Motor neuron (in vitro differentiated cells): ENCODE measurements at regions of chr2 and their contacts with region 1.

Region 1: GRCh38 chr2:56183643-56184499 is at the start of gene CCDC85A:
- ATAC-seq: peak; percentile 79 to 92 (median 90)
- H3K4me3 ChIP-seq: peak within 1 kb of the TSS; percentile 51 to 89 (median 81)
- H3K27ac ChIP-seq: peak within 1 kb of the TSS in 1 of 2 donors; percentile 14
- H3K4me1 ChIP-seq: peaks cover 8 to 9% of the 10 kb centered on the region in 2 donors
- total RNA-seq, gene CCDC85A: 0.24 to 6.0 (median 1.7) TPM

Region 2: GRCh38 chr2:55168221-55169154 is 1015.4 kb before region 1 on chr2:
- in situ Hi-C with region 1: no loop called
- ATAC-seq: peak; percentile 59 to 87 (median 71)
- H3K4me3 ChIP-seq: no peak overlapping the region
- H3K27ac ChIP-seq: no peak overlapping the region
- H3K4me1 ChIP-seq: peaks cover 36 to 44% of the 10 kb centered on the region in 2 donors

Region 3: GRCh38 chr2:56749152-56749752 is 565.4 kb after region 1 on chr2:
- in situ Hi-C with region 1: loop called in 5 of 9 experiments (anchors 10 to 25 kb)
- ATAC-seq: peak in 3 of 8 experiments; percentile 25 to 33 (median 26)
- H3K4me3 ChIP-seq: no peak overlapping the region
- H3K27ac ChIP-seq: no peak overlapping the region
- H3K4me1 ChIP-seq: no peaks in the 10 kb centered on the region

Region 4: DNA sequence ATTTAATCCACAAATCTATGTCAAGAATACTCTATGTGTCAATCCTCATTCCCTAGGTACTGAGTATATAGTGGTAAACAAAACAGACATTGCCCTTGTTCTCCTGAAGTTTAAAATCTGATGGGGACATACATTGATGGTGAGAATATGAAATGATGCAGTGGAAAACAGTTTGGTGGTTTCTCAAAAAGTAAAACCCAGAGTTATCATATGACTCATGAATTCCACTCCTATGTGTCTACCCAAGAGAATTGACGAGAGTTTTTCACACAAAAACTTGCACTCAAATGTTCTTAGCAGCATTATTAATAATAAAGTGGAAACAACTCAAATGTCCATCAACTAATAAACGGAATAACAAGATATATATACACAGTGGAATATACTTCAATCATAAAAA is 586.6 kb after region 1 on chr2:
- in situ Hi-C with region 1: loop called in 1 of 9 experiments (anchors 25 kb)
- ATAC-seq: no peak
- H3K4me3 ChIP-seq: no peak overlapping the region
- H3K27ac ChIP-seq: no peak overlapping the region
- H3K4me1 ChIP-seq: no peaks in the 10 kb centered on the region

Region 5: GRCh38 chr2:57497489-57498096 is 1313.7 kb after region 1 on chr2:
- in situ Hi-C with region 1: loop called in 7 of 9 experiments (anchors 10 to 25 kb)
- ATAC-seq: peak; percentile 52 to 70 (median 60)
- H3K4me3 ChIP-seq: no peak overlapping the region
- H3K27ac ChIP-seq: no peak overlapping the region
- H3K4me1 ChIP-seq: peaks cover 0 to 3% of the 10 kb centered on the region in 2 donors

Region 6: GRCh38 chr2:57516698-57517340 is 1332.9 kb after region 1 on chr2:
- in situ Hi-C with region 1: loop called in 3 of 9 experiments (anchors 25 kb)
- ATAC-seq: peak; percentile 49 to 71 (median 56)
- H3K4me3 ChIP-seq: no peak overlapping the region
- H3K27ac ChIP-seq: no peak overlapping the region
- H3K4me1 ChIP-seq: peaks cover 0 to 15% of the 10 kb centered on the region in 2 donors